HEK293 (cell line): ENCODE measurements at regions of chr5 and their contacts with region 1.

Region 1: DNA sequence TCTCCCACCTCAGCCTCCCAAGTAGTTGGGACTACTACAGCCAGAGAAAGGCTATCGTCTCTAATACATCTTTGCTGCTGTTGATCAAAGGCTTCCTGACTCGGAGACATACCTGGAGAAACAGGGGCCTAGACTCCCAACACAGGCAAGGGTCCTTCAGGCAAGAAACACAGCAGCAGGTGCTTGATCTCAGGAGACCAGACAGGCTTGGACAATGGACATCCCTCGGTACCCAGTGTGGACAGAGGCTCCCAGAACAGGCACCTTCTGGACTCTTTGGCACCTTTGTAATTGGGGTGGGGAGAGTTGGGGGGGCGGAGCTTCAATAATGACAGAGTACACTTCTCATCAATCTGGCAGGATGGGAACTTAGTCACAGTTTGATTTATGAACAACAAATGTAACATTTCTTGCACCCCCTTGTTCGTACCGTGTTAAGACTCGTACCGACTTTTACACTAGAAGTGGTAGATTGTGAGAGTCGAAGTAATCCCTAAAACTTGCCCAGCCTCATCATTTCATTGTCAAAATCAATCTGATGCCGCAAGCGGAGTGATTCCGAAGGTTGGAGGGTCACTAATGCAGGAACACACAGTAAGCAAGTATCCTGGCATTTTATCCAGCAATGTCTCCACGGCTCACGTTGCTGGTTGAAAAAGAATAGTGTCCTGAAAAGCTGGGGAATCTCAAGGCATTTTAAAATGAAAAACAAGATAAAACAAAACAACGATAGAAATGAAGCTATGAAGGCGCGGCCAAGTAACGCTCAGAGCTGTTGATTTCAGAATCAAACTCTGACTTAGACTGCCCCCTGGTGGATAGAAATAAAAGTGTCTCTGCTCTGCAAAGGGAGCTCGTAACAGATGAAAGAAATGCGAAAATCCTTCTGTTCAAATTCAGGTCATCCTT is 46.4 kb upstream of the STK32A start:
- H3K4me3 ChIP-seq: no peak overlapping the region
- H3K27ac ChIP-seq: no peak overlapping the region
- H3K4me1 ChIP-seq: no peaks in the 10 kb centered on the region
- CTCF ChIP-seq: peak; percentile 41

Region 2: DNA sequence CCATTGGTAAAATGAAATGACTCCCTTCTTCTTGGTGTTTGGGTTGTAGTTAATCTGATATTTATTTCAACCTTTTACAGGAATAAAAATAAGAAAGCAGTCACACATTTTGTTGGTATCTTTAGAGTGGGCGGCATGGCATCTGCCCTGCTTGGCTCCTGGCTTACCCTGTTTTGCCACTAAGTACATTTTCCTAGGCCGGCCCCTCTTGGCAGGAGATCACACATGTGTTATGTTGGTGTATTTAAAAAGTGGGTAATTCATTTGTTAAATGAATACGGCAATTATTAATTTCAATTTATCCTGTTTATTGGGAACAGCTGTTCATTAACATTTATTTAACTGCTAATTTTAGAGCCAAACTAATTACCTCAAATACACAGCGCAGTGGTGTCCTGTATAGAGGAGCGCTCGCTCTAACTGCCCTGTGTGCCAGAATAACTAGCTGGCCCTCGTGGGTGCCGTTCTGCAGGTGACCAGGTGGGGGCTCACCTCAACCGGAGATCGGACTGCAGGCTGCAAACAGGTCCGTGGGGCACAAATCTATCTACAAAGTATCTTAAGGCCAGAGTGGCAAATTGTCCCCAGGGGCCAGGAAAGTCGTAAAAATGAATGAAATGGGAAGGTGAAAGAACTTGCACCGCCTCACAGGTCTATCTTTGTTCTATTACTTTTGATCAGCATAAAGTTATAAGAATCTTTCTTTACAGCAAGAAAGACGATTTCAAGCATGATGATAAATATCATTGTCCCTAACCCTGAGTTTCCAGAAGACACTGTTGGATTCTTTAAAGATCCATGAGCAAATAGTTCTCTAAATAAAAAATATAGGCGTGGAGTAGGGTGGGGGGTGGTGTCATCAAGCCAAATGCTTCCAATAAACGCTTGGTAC is 646.2 kb before region 1 on chr5:
- CTCF ChIA-PET with region 1: interaction called, 26 read pairs
- POLR2A ChIA-PET with region 1: no interaction called
- H3K4me3 ChIP-seq: no peak overlapping the region
- H3K27ac ChIP-seq: no peak overlapping the region
- H3K4me1 ChIP-seq: no peaks in the 10 kb centered on the region
- CTCF ChIP-seq: peak; percentile 69

Region 3: GRCh38 chr5:146706321-146706975 is 482.0 kb before region 1 on chr5:
- CTCF ChIA-PET with region 1: no interaction called
- POLR2A ChIA-PET with region 1: no interaction called
- H3K4me3 ChIP-seq: no peak overlapping the region
- H3K27ac ChIP-seq: no peak overlapping the region
- H3K4me1 ChIP-seq: no peaks in the 10 kb centered on the region
- CTCF ChIP-seq: no peak

Region 4: GRCh38 chr5:147098233-147098790 is 90.1 kb before region 1 on chr5:
- CTCF ChIA-PET with region 1: interaction called, 78 read pairs
- POLR2A ChIA-PET with region 1: no interaction called
- H3K4me3 ChIP-seq: no peak overlapping the region
- H3K27ac ChIP-seq: no peak overlapping the region
- H3K4me1 ChIP-seq: no peaks in the 10 kb centered on the region
- CTCF ChIP-seq: no peak

Region 5: GRCh38 chr5:147203213-147203612 is 14.8 kb after region 1 on chr5:
- CTCF ChIA-PET with region 1: interaction called, 14 read pairs
- POLR2A ChIA-PET with region 1: no interaction called
- H3K4me3 ChIP-seq: no peak overlapping the region
- H3K27ac ChIP-seq: no peak overlapping the region
- H3K4me1 ChIP-seq: no peaks in the 10 kb centered on the region
- CTCF ChIP-seq: no peak

Region 6: DNA sequence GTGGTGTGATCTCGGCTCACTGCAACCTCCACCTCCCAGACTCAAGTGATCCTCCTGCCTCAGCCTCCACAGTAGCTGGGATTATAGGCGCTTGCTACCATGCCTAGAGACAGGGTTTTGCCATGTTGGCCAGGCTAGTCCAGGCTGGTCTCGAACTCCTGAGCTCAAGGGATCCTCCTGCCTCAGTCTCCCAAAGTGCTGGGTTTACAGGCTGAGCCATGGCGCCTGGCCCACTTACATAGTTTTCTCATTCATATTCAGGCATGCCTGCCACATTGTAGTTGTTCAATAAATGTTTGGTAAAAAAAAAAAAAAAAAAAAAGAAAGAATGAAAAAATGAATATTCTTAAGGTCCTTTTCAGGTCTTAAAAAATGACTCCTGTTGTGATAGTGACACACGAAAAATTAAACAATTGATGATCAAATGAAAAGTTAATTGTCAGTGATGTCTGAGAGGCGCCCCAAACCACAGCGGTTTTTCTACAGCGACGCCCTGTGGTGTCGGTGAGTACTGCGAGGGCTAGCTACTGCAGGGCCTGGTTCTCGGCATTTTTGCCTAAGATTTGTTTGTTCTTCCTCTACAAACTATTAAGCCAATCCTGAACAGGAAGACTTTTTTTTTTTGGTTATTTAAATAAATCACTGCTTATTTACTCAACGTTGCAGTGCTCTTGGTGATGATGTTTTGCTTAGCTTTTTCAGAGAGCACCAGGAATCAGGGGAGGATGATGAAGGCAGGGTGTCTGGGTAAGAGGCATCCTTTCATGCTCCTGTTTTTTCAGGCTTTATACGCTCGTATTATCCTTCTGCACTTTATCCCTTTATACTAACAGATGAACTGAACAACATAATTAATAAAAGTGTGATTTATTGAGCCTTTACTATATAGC is 388.4 kb after region 1 on chr5:
- CTCF ChIA-PET with region 1: interaction called, 10 read pairs
- POLR2A ChIA-PET with region 1: no interaction called
- H3K4me3 ChIP-seq: no peak overlapping the region
- H3K27ac ChIP-seq: no peak overlapping the region
- H3K4me1 ChIP-seq: no peaks in the 10 kb centered on the region
- CTCF ChIP-seq: no peak